ENCODE measurements at regions of chr9 and their contacts with region 1.

Region 1: DNA sequence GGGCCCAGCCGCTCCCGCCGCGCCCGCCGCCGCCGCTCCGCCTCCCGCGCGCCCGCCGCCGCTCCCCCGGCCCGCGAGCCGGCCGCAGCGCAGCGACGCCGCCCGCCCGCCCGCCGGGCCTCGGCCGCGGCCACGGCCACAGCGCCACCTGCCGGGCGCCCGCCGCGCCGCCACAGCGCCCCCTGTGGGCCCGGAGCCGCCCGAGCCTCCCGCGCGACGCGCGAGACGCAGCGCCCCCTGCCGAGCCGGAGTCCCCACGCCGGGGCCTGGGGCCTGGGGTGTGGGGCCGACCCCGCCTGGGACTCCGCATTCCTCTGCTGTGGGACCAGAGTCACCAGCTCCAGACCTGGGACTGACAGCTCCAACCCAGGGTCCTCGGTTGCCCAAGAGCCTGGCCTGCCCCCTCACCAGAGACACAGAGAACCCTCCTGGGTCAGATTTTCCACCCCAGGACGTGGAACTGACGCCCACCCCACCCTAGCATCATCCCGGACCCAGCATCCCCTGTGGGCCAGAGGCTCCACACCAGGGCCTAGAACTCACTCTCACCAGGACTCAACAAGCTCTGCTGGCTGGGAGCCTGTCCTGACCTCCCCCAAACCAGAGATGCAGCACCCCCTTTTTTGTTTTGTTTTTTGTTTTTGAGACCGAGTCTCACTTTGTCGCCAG is at the start of gene RAPGEF1:
- DNase-seq: peak; percentile 85
- H3K4me3 Mint-ChIP-seq: peak within 1 kb of the TSS; percentile 97
- H3K27ac Mint-ChIP-seq: peak within 1 kb of the TSS; percentile 92
- H3K4me1 Mint-ChIP-seq: peaks cover 59% of the 10 kb centered on the region
- H3K27me3 Mint-ChIP-seq: no peaks in the 10 kb centered on the region
- total RNA-seq, gene RAPGEF1: 149 to 158 TPM

Region 2: DNA sequence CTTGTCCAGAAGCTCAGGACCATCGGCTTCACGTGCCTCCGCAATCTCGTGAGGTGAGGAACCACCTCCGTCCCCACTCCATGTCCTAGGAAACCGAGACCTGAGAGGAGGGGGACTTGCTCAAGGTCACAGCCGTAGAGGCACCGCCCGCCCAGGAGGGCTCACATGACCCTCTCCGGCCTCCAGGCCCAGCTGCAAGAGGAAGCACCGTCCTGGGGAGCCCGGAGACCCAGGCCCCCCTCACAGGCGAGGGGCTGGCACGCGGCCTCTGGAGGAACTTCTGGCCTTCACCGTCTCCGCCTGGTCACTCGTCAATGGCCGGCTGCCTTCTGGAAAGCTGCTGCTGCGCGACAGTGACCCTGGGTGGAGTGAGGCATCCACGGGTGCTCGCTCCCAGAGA is 488.0 kb before region 1 on chr9:
- CTCF ChIA-PET with region 1: no interaction called
- POLR2A ChIA-PET with region 1: no interaction called
- DNase-seq: no peak
- H3K4me3 Mint-ChIP-seq: peak overlapping the region; percentile 77
- H3K27ac Mint-ChIP-seq: peak overlapping the region; percentile 98
- H3K4me1 Mint-ChIP-seq: peaks cover 57% of the 10 kb centered on the region
- H3K27me3 Mint-ChIP-seq: no peaks in the 10 kb centered on the region

Region 3: GRCh38 chr9:131464354-131465000 is 275.6 kb before region 1 on chr9:
- CTCF ChIA-PET with region 1: no interaction called
- POLR2A ChIA-PET with region 1: no interaction called
- DNase-seq: no peak
- H3K4me3 Mint-ChIP-seq: no peak overlapping the region
- H3K27ac Mint-ChIP-seq: no peak overlapping the region
- H3K4me1 Mint-ChIP-seq: no peaks in the 10 kb centered on the region
- H3K27me3 Mint-ChIP-seq: no peaks in the 10 kb centered on the region

Region 4: DNA sequence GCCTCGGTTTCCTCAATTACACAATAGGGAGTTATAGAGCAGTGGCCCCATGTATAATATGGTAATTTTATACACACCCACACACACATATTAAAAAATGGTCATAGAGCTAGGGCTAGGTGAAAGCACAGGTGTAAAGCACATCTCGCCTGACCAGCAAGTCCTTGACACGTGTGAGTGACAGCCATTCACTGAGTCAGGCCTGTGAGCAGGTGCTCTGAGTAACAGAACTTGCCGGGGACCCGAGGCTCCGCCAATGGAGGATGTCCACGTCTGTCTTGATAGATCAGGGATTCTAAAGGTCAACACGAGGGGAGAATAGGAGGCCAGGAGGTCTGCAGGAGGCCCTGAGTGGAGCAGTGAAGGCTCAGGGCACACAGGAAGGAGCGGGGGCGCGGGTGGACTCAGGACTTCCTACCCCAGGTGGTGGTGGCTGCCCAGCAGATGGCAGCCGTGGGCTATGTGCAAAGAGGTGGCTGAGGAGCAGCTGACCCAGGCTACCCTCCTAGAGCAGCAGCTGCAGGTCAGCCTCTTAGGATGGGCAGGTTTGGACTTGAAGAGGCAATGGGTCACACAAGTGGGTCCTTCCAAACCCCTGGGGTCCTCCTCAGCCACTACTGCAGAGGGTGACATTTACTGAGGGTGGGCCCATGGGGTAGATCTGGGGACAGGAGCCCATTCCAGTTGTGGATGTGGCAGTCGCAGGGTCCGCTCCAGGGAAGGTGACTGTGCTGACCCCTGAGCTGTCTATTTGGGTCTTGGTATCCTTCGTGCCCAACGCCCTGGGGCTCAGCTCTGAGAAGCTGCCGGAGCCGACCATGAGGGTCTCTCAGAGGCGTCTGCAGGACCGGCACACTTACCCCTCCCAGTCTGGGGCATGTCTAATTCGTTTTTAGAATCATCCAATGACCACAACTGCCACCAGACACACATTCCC is 148.9 kb before region 1 on chr9:
- CTCF ChIA-PET with region 1: interaction called, 77 read pairs
- POLR2A ChIA-PET with region 1: interaction called, 13 read pairs
- DNase-seq: peak; percentile 80
- H3K4me3 Mint-ChIP-seq: no peak overlapping the region
- H3K27ac Mint-ChIP-seq: peak overlapping the region; percentile 71
- H3K4me1 Mint-ChIP-seq: peaks cover 38% of the 10 kb centered on the region
- H3K27me3 Mint-ChIP-seq: no peaks in the 10 kb centered on the region

Region 5: DNA sequence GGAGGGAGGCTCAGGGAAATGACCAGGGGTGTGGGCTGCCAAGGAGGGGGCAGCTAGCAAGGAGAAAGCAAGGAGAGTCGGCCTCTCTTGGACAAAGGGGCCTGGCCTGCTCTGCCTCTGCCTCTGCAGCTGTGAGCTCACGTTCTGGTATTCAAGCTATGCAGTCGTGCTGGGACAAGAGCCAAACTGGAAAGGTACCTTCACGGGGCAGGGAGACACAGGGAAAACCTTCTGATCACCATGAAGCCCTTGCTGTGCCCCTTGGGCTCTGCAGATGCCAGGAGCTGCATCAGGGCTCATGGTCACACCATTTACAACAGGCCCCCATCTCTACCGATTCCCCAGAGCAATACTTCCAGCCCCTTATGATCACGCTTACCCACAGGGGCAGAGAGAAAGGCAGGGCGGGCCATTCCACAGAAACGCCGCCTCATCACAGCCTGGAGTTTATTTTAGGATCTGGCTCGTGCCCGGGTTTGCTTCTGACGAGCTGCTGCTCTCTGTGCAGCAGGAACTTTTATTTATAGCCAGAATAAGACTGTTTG is 131.5 kb before region 1 on chr9:
- CTCF ChIA-PET with region 1: no interaction called
- POLR2A ChIA-PET with region 1: no interaction called
- DNase-seq: no peak
- H3K4me3 Mint-ChIP-seq: no peak overlapping the region
- H3K27ac Mint-ChIP-seq: peak overlapping the region; percentile 13
- H3K4me1 Mint-ChIP-seq: no peaks in the 10 kb centered on the region
- H3K27me3 Mint-ChIP-seq: no peaks in the 10 kb centered on the region

Region 6: GRCh38 chr9:131641618-131642495 is 98.3 kb before region 1 on chr9:
- CTCF ChIA-PET with region 1: interaction called, 11 read pairs
- POLR2A ChIA-PET with region 1: interaction called, 7 read pairs
- DNase-seq: no peak
- H3K4me3 Mint-ChIP-seq: no peak overlapping the region
- H3K27ac Mint-ChIP-seq: peak overlapping the region; percentile 85
- H3K4me1 Mint-ChIP-seq: peaks cover 60% of the 10 kb centered on the region
- H3K27me3 Mint-ChIP-seq: no peaks in the 10 kb centered on the region

Region 7: GRCh38 chr9:131845305-131846298 is 105.5 kb after region 1 on chr9:
- CTCF ChIA-PET with region 1: no interaction called
- POLR2A ChIA-PET with region 1: no interaction called
- DNase-seq: no peak
- H3K4me3 Mint-ChIP-seq: no peak overlapping the region
- H3K27ac Mint-ChIP-seq: peak overlapping the region; percentile 71
- H3K4me1 Mint-ChIP-seq: peaks cover 19% of the 10 kb centered on the region
- H3K27me3 Mint-ChIP-seq: peaks cover 15% of the 10 kb centered on the region

Measured in activated CD4-positive, alpha-beta memory T cell treated with anti-CD3 and anti-CD28 coated beads, Interleukin-2, amount 10 ng/mL, durations not matched to agents 7 days and 5 days (primary cell).